ENCODE measurements at regions of chr4 and their contacts with region 1.

Region 1: DNA sequence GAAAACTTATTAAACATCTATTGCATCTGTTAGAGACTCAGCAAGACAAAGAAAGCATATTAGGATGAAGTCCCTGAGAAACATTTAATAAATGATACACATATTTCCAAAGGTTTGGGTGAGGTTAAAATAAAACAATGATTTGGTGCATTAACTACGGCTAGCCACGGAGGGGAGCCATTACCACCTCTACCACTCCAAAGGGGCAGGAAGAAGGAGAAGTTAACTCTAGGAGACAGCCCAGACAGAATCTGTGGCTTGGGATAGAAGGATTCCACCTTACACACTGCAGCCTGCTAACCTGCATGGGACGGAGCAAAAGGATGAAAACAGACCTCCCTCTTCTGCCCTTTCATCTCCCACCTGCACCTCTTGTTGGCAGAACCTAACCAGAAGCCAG is 189.1 kb upstream of the C1QTNF7 start:
- DNase-seq: peak in 1 of 2 donors; percentile 46
- ATAC-seq: peak; percentile 58 to 64 (median 59)
- H3K4me3 ChIP-seq: no peak overlapping the region
- H3K4me3 Mint-ChIP-seq: no peak overlapping the region
- H3K27ac ChIP-seq: no peak overlapping the region
- H3K27ac Mint-ChIP-seq: no peak overlapping the region
- H3K4me1 ChIP-seq: peaks cover 6% of the 10 kb centered on the region
- H3K4me1 Mint-ChIP-seq: peaks cover 10 to 11% of the 10 kb centered on the region in 2 donors
- H3K27me3 ChIP-seq: no peaks in the 10 kb centered on the region
- H3K27me3 Mint-ChIP-seq: no peaks in the 10 kb centered on the region
- CTCF ChIP-seq: peak; percentile 20

Region 2: DNA sequence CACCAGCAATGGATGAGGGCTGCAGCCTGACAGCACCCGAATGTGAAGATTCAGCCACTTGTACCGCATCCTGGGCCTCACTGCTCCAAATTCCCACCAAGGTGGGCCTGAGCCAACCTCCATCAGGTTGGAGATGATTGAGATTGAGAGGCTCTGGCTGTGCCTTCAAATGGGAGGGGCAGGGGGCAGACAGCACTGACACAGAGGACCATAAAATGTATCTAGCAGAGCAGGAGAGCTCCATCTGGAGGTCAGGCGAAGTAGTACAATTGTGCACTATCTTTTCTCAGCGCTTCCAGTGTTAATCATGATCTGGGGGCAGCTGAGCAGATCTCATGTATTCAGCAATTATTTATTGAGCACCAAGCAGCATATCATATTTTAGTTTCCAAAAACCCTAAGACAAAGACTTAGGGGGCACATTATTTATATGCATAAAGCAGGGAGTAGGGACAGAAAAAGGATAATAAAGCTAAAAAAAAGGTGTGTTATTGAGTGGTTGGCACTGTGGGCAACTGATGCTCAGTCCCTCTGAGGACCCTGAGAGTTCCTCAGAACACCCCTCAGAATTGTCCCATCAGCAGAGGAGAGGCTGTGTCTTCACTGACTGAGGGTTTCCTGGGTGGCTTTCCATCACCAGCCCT is 157.6 kb after region 1 on chr4:
- intact Hi-C with region 1: loop called (anchors 2 kb)
- DNase-seq: peak; percentile 23 to 73
- ATAC-seq: peak; percentile 73 to 90 (median 89)
- H3K4me3 ChIP-seq: no peak overlapping the region
- H3K4me3 Mint-ChIP-seq: no peak overlapping the region
- H3K27ac ChIP-seq: no peak overlapping the region
- H3K27ac Mint-ChIP-seq: peak overlapping the region in 1 of 2 donors; percentile 17
- H3K4me1 ChIP-seq: peaks cover 10% of the 10 kb centered on the region
- H3K4me1 Mint-ChIP-seq: peaks cover 24 to 32% of the 10 kb centered on the region in 2 donors
- H3K27me3 ChIP-seq: no peaks in the 10 kb centered on the region
- H3K27me3 Mint-ChIP-seq: peaks cover 0 to 3% of the 10 kb centered on the region in 2 donors
- CTCF ChIP-seq: peak; percentile 86

Measured in natural killer cell (primary cell).